ENCODE measurements at regions of chr3 and their contacts with region 1.

Region 1: DNA sequence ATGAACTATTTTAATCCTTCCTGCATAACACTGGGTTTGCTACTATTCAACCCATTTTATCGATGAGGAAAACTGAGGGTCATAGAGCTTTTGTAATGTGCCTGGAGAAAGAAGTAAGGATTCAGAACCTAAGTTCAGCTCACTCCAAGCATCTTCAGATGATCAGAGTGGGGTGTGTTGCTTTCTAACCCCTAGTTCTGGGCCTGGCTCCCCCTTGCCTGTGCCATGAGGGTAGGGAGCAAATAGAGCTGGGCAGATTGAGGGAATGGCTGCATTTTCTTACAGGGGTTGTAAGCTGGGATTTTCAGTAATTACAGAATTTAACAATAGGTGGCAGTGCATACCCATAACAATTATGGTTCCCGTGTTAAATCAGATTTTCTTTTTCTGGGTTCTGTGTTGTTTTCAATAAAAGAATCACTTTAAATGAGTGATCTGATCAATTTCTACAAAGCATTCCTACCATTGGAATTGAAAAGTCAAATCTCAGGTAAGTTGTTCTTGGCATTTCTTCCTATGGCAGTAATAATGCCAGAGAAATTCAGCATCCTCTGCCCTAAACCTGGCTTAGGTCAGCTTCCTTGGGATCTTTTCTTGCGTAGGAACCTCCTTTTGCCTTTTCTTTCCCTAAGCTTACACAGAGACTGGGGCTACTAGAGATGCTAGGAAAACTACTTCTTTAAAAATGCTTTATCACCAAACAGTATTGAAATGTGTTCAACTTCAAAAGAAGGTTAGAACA is 103.8 kb upstream of the IL12A start:
- DNase-seq: no peak
- H3K4me3 ChIP-seq: peak overlapping the region in 6 of 59 donors; percentile 4 to 17 (median 9)
- H3K27ac ChIP-seq: peak overlapping the region in 58 of 59 donors; percentile 11 to 98 (median 82)
- H3K27me3 ChIP-seq: no peaks in the 10 kb centered on the region
- CTCF ChIP-seq: peak; percentile 31 to 87 (median 71)

Region 2: DNA sequence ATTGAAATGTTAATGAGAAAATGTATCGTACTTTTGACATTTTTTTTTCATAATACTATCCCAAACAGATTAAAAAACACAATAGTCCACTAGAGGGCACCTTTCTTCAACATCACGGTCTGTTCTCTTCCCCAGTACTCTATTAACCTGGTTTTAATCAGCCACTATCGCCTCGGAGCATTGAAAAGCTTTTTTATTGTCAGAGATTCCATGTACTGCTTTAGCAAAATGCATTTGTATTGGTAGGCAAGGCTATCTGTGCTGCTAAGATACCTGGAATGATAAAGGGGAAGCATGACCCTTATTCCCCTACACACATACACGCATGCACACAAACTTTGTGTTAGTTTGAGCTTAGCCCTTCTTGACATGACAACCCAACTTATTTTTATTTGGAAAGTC is 56.3 kb before region 1 on chr3:
- intact Hi-C with region 1: loop called in 1 of 2 experiments (anchors 2 kb)
- DNase-seq: no peak
- H3K4me3 ChIP-seq: peak overlapping the region in 20 of 59 donors; percentile 3 to 39 (median 12)
- H3K27ac ChIP-seq: peak overlapping the region in 48 of 59 donors; percentile 0 to 80 (median 56)
- H3K27me3 ChIP-seq: no peaks in the 10 kb centered on the region
- CTCF ChIP-seq: peak; percentile 52 to 84 (median 70)

Region 3: DNA sequence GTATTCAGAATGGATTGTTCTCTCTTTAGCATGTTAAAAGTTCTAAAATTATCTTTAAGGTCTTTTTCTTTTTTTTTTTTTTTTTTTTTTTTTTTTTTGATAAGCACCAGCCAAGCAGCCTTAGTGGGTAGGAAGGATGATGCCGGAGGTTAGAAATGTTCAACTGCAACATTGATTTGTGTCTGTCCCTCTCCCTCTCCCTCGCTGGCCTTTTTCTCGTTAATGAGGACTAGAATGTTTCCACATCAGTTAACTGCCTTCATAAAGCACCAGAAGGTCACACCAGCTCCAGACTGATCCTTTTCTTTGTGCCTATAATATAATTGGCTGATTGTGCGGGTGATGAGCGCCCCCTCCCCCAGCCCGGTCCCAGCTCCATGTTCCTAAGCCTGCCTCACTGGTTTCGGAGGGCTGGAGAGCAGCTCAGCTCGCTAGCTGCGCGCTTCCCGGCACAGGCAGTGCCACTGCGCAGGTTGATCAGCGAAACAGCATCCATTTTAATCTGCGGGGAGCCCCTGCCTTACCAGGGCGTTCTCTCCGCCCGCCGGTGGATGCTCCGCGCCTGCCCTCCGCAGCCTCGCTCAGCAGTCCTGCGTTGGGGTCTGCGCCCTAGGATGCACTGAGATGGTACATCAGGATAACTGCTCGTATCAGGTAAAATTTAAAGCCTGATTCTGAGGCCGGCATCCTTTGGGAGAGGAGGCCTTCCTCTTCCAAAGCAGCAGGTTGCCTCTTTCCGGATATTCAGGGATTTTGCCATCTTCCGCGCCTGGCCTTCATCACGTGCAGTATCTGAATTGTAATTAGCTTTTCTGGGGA is 45.1 kb before region 1 on chr3:
- intact Hi-C with region 1: loop called in 1 of 2 experiments (anchors 5 kb)
- DNase-seq: peak; percentile 79 to 93 (median 89)
- H3K4me3 ChIP-seq: peak within 1 kb of the TSS; percentile 57 to 93 (median 75)
- H3K27ac ChIP-seq: peak within 1 kb of the TSS; percentile 67 to 100 (median 98)
- H3K27me3 ChIP-seq: no peaks in the 10 kb centered on the region
- CTCF ChIP-seq: peak in 30 of 56 donors; percentile 5 to 53 (median 16)

Region 4: DNA sequence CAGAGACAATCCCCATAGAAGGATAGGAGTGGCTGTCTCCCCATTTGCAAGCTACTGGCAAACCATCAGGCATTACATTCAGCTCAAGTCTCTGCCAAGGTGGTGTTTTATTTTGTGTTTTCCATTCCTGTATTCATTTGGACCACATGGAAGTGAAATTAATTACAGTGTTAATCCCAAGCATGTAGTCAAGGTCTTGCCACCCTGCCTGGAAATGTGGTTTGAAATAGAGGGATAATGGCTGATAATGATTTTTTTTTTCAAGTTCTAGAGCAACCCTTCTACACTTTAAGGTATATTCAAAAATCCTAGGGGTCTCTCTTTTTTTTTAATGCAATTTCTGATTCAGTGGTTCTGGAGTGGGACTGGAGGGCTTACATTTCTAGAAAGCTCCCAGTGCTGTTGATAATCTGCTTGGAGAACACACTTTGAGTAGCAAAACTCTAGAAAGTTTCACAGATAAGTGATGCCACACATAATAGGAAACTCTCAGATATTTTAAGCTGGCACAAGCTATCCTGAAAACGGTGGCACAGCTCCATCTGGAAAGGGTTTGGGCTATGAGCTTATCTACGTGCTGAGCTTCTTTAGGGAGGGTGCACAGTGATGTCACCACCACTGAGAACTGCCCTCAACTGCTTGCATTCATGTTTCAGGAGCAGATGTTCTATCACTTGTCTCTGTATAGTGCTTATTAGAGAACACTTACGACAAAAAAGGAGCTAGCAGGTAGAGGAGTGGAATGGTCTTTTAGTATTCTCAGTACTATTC is 36.3 kb before region 1 on chr3:
- intact Hi-C with region 1: loop called (anchors 5 kb)
- DNase-seq: peak in 5 of 10 donors; percentile 48 to 80 (median 58)
- H3K4me3 ChIP-seq: peak overlapping the region in 18 of 59 donors; percentile 2 to 40 (median 16)
- H3K27ac ChIP-seq: peak overlapping the region in 57 of 59 donors; percentile 16 to 100 (median 93)
- H3K27me3 ChIP-seq: no peaks in the 10 kb centered on the region
- CTCF ChIP-seq: no peak

Region 5: DNA sequence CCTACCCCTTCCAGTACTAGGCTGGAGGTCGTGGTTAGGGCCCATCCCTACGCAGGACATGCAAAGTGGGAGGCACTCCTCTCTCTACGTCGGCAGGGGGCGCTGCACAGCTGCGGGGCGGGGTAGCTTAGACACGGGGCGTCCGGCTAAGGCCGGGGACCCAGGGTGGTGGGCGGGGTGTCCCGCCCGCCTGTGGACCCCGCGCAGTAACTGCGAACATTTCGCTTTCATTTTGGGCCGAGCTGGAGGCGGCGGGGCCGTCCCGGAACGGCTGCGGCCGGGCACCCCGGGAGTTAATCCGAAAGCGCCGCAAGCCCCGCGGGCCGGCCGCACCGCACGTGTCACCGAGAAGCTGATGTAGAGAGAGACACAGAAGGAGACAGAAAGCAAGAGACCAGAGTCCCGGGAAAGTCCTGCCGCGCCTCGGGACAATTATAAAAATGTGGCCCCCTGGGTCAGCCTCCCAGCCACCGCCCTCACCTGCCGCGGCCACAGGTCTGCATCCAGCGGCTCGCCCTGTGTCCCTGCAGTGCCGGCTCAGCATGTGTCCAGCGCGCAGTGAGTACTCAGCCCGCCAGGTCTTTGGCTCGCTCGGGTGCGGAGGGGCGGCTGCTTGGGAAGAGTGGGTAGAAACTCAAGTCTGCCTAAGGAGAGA is 103.9 kb after region 1 on chr3 and contains the start of gene IL12A:
- intact Hi-C with region 1: loop called in 1 of 2 experiments (anchors 5 kb)
- DNase-seq: peak; percentile 49 to 83 (median 70)
- H3K4me3 ChIP-seq: peak within 1 kb of the TSS; percentile 54 to 97 (median 79)
- H3K27ac ChIP-seq: peak within 1 kb of the TSS in 21 of 59 donors; percentile 2 to 84 (median 45)
- H3K27me3 ChIP-seq: no peaks in the 10 kb centered on the region
- CTCF ChIP-seq: peak; percentile 68 to 95 (median 88)
- total RNA-seq, gene IL12A: 0.38 to 6.5 (median 1.4) TPM in 115 of 120 experiments, not detected in the others